ENCODE measurements at regions of chr17 and their contacts with region 1.

Region 1: GRCh38 chr17:61155590-61156243 is 243.9 kb upstream of the TBX2 start:
- DNase-seq: no peak
- ATAC-seq: no peak
- H3K4me3 ChIP-seq: no peak overlapping the region
- H3K27ac ChIP-seq: no peak overlapping the region
- H3K4me1 ChIP-seq: peaks cover 0 to 9% (median 0%) of the 10 kb centered on the region in 12 donors
- H3K27me3 ChIP-seq: no peaks in the 10 kb centered on the region
- CTCF ChIP-seq: no peak
- POLR2A ChIP-seq: no peak

Region 2: DNA sequence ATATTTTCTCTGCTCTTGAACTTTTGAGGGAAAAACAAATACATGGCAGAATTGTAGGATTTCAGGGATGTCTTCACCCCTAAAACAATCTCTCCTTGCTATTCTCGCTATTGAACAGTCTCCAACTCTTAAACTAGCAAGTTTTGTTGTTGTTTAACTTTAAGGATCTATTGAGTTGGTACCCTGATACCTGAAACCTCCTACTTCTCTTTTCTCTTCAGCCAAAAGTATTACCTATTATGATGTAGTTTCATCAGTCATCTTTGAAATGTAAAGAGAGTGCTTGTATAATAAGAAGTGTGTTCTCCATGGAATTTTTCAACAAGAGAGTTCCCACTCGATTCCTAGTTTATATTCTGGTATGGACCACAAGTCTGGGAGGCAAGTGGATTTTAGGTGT is 32.4 kb after region 1 on chr17:
- intact Hi-C with region 1: loop called in 1 of 10 experiments (anchors 2 kb)
- DNase-seq: no peak
- ATAC-seq: no peak
- H3K4me3 ChIP-seq: no peak overlapping the region
- H3K27ac ChIP-seq: no peak overlapping the region
- H3K4me1 ChIP-seq: no peaks in the 10 kb centered on the region
- H3K27me3 ChIP-seq: no peaks in the 10 kb centered on the region
- CTCF ChIP-seq: no peak
- POLR2A ChIP-seq: no peak

Measured in heart left ventricle (tissue), 16 donors.